ENCODE measurements at regions of chr1 and their contacts with region 1.

Region 1: GRCh38 chr1:161399257-161399998 is 31.8 kb upstream of the CFAP126 start:
- DNase-seq: peak; percentile 87 to 97 (median 93)
- ATAC-seq: peak; percentile 87
- H3K4me3 ChIP-seq: peak overlapping the region; percentile 91
- H3K4me3 Mint-ChIP-seq: peak overlapping the region; percentile 93 to 99 (median 96)
- H3K27ac ChIP-seq: peak overlapping the region; percentile 92
- H3K27ac Mint-ChIP-seq: peak overlapping the region; percentile 99 to 100 (median 99)
- H3K4me1 ChIP-seq: peaks cover 11 to 13% of the 10 kb centered on the region in 2 donors
- H3K4me1 Mint-ChIP-seq: peaks cover 23 to 42% (median 31%) of the 10 kb centered on the region in 7 donors
- H3K27me3 ChIP-seq: no peaks in the 10 kb centered on the region
- H3K27me3 Mint-ChIP-seq: peaks cover 5 to 17% (median 11%) of the 10 kb centered on the region in 5 donors

Region 2: GRCh38 chr1:161420763-161421455 is 21.5 kb after region 1 on chr1:
- CTCF ChIA-PET with region 1: no interaction called
- POLR2A ChIA-PET with region 1: no interaction called
- intact Hi-C with region 1: loop called (anchors 1 kb)
- DNase-seq: no peak
- ATAC-seq: no peak
- H3K4me3 ChIP-seq: no peak overlapping the region
- H3K4me3 Mint-ChIP-seq: peak overlapping the region in 9 of 10 donors; percentile 4 to 84 (median 67)
- H3K27ac ChIP-seq: no peak overlapping the region
- H3K27ac Mint-ChIP-seq: peak overlapping the region in 1 of 9 donors; percentile 62
- H3K4me1 ChIP-seq: peaks cover 0 to 4% of the 10 kb centered on the region in 2 donors
- H3K4me1 Mint-ChIP-seq: peaks cover 0 to 14% (median 7%) of the 10 kb centered on the region in 7 donors
- H3K27me3 ChIP-seq: no peaks in the 10 kb centered on the region
- H3K27me3 Mint-ChIP-seq: peaks cover 0 to 6% (median 4%) of the 10 kb centered on the region in 5 donors

Region 3: DNA sequence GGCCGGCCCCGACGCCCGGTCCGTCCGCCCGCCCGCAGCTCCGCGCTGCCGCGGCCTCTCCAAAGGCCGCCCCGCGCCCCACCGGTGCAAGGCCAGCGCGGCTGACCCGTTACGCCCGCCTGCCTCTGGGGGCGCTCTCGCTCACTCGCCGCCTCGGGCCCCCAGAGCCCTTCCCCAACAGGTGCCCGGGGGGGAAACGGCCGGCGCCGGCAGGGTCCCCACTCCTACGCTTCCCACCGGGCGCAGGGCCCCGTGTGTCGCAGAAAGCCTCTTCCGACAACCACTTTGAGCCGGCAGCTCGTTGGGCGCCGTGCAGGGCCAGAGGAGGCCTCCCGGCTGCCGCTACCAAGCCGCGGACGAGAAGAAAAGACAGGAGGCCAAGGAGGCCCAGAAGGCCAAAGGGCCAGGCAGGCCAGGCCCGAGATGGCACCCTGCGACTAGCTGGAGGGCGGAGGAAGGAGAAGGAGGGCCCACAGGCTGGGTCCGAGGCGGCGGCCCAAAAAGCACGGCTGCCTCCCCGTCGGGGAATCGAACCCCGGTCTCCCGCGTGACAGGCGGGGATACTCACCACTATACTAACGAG is 41.0 kb after region 1 on chr1:
- CTCF ChIA-PET with region 1: no interaction called
- POLR2A ChIA-PET with region 1: no interaction called
- intact Hi-C with region 1: loop called (anchors 10 kb)
- DNase-seq: peak in 7 of 9 donors; percentile 26 to 84 (median 36)
- ATAC-seq: peak; percentile 51
- H3K4me3 ChIP-seq: peak overlapping the region; percentile 52
- H3K4me3 Mint-ChIP-seq: peak overlapping the region; percentile 61 to 90 (median 83)
- H3K27ac ChIP-seq: no peak overlapping the region
- H3K27ac Mint-ChIP-seq: peak overlapping the region in 1 of 9 donors; percentile 91
- H3K4me1 ChIP-seq: peaks cover 0 to 6% of the 10 kb centered on the region in 2 donors
- H3K4me1 Mint-ChIP-seq: peaks cover 0 to 22% (median 16%) of the 10 kb centered on the region in 7 donors
- H3K27me3 ChIP-seq: peaks cover 0 to 5% of the 10 kb centered on the region in 2 donors
- H3K27me3 Mint-ChIP-seq: peaks cover 33 to 45% (median 41%) of the 10 kb centered on the region in 5 donors

Region 4: GRCh38 chr1:161531986-161532643 is 132.7 kb after region 1 on chr1:
- CTCF ChIA-PET with region 1: no interaction called
- POLR2A ChIA-PET with region 1: no interaction called
- intact Hi-C with region 1: loop called in 1 of 2 experiments (anchors 2 kb)
- DNase-seq: no peak
- ATAC-seq: no peak
- H3K4me3 ChIP-seq: no peak overlapping the region
- H3K4me3 Mint-ChIP-seq: peak overlapping the region in 9 of 10 donors; percentile 25 to 59 (median 50)
- H3K27ac ChIP-seq: no peak overlapping the region
- H3K27ac Mint-ChIP-seq: peak overlapping the region in 6 of 9 donors; percentile 10 to 80 (median 66)
- H3K4me1 ChIP-seq: peaks cover 10 to 11% of the 10 kb centered on the region in 2 donors
- H3K4me1 Mint-ChIP-seq: peaks cover 0 to 23% (median 19%) of the 10 kb centered on the region in 7 donors
- H3K27me3 ChIP-seq: no peaks in the 10 kb centered on the region
- H3K27me3 Mint-ChIP-seq: peaks cover 0 to 34% (median 0%) of the 10 kb centered on the region in 5 donors

Region 5: GRCh38 chr1:161726596-161727457 is 327.4 kb after region 1 on chr1:
- CTCF ChIA-PET with region 1: no interaction called
- POLR2A ChIA-PET with region 1: no interaction called
- intact Hi-C with region 1: loop called in 1 of 2 experiments (anchors 5 kb)
- DNase-seq: peak; percentile 48 to 68 (median 64)
- ATAC-seq: peak; percentile 73
- H3K4me3 ChIP-seq: peak overlapping the region; percentile 93
- H3K4me3 Mint-ChIP-seq: peak overlapping the region; percentile 89 to 100 (median 99)
- H3K27ac ChIP-seq: peak overlapping the region; percentile 59
- H3K27ac Mint-ChIP-seq: peak overlapping the region in 6 of 9 donors; percentile 38 to 94 (median 72)
- H3K4me1 ChIP-seq: peaks cover 11 to 16% of the 10 kb centered on the region in 2 donors
- H3K4me1 Mint-ChIP-seq: peaks cover 30 to 51% (median 35%) of the 10 kb centered on the region in 7 donors
- H3K27me3 ChIP-seq: no peaks in the 10 kb centered on the region
- H3K27me3 Mint-ChIP-seq: peaks cover 0 to 76% (median 0%) of the 10 kb centered on the region in 5 donors

Region 6: GRCh38 chr1:161749509-161750407 is 350.3 kb after region 1 on chr1 and contains the start of gene DUSP12:
- CTCF ChIA-PET with region 1: no interaction called
- POLR2A ChIA-PET with region 1: no interaction called
- intact Hi-C with region 1: loop called in 1 of 2 experiments (anchors 1 kb)
- DNase-seq: peak; percentile 69 to 86 (median 83)
- ATAC-seq: peak; percentile 99
- H3K4me3 ChIP-seq: peak within 1 kb of the TSS; percentile 86
- H3K4me3 Mint-ChIP-seq: peak within 1 kb of the TSS; percentile 96 to 100 (median 99)
- H3K27ac ChIP-seq: peak within 1 kb of the TSS; percentile 74
- H3K27ac Mint-ChIP-seq: peak within 1 kb of the TSS; percentile 83 to 99 (median 96)
- H3K4me1 ChIP-seq: peaks cover 10 to 12% of the 10 kb centered on the region in 2 donors
- H3K4me1 Mint-ChIP-seq: peaks cover 32 to 50% (median 43%) of the 10 kb centered on the region in 7 donors
- H3K27me3 ChIP-seq: no peaks in the 10 kb centered on the region
- H3K27me3 Mint-ChIP-seq: peaks cover 0 to 24% (median 5%) of the 10 kb centered on the region in 5 donors
- total RNA-seq, gene DUSP12: 16.1 to 31.4 (median 24.1) TPM

Region 7: DNA sequence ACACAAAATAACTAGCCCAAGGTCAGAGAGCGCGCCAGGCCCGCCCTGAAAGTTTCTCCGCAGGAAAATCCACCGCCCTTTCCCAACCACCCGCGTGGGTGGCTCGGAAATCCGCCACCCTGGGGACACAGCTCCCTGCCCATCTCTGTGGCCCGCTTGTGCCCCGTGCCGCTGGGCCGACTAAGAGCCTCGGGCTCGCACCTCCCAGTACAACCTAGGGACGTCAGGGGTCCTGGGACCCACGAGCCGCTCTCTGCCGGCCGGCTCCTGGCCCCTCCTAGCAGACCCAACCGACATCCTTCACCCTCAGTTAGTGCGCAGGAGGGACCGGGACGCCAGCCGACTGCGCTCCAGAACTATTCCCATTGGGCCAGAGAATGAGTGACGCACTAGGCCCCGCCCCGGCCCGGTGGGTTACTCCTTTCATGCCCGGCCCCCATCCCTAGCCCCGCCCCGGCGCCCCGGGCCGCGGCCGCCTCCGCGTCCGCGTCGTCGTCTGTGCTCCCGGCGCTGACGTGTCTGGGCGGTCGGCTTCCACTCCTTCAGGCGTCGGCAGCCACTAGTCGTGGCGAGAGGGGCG is 1161.7 kb after region 1 on chr1:
- CTCF ChIA-PET with region 1: no interaction called
- POLR2A ChIA-PET with region 1: no interaction called
- intact Hi-C with region 1: loop called in 1 of 2 experiments (anchors 5 kb)
- DNase-seq: peak; percentile 97 to 99 (median 97)
- ATAC-seq: peak; percentile 97
- H3K4me3 ChIP-seq: peak overlapping the region; percentile 91
- H3K4me3 Mint-ChIP-seq: peak overlapping the region; percentile 89 to 98 (median 96)
- H3K27ac ChIP-seq: peak overlapping the region; percentile 91
- H3K27ac Mint-ChIP-seq: peak overlapping the region; percentile 95 to 99 (median 97)
- H3K4me1 ChIP-seq: peaks cover 10% of the 10 kb centered on the region in 2 donors
- H3K4me1 Mint-ChIP-seq: peaks cover 16 to 51% (median 44%) of the 10 kb centered on the region in 7 donors
- H3K27me3 ChIP-seq: no peaks in the 10 kb centered on the region
- H3K27me3 Mint-ChIP-seq: no peaks in the 10 kb centered on the region